MCF 10A (cell line): ENCODE measurements at regions of chr5 and their contacts with region 1.

Region 1: DNA sequence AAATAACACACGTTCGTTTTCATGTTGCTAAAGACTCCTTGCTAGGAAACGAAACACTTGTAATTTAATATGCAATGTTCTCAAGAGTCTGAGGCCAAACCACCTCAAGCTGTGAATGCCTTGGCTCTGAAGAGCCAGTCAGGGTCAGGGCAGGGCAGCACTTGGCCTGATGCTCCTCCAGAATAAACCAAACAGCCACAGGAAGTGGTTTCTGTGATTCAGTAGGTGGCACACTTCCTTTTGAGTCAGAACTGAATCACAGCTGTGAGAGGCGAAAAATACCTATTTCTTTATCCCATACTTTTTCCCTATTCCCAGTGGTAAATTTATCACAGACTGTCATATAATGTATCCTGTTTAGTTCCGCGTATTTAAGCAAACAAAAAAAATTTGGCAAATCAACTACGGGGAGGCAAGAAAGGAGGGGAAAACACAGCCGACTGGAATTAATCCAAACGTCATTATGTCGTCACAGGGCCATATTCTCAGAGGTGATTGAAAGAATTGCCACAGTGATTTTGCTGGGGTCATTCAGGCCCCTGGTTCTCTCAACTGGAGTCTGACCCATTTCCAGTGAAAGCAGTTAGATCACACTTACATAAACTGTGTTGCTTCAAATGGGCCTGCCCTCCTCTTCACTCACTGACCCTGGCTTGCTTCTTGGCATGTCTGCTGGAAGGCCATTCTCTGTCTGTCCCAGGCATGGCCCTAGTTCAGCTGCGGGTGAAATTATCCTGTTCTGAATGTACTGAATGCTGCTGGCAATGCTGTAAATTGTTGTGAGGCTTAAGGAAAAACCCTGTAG is 71.2 kb downstream of the ARRDC3 start:
- DNase-seq: peak; percentile 98
- H3K4me3 Mint-ChIP-seq: peak overlapping the region; percentile 50
- H3K27ac Mint-ChIP-seq: peak overlapping the region; percentile 91
- H3K4me1 Mint-ChIP-seq: peaks cover 43% of the 10 kb centered on the region
- H3K27me3 Mint-ChIP-seq: no peaks in the 10 kb centered on the region
- CTCF ChIP-seq: no peak

Region 2: DNA sequence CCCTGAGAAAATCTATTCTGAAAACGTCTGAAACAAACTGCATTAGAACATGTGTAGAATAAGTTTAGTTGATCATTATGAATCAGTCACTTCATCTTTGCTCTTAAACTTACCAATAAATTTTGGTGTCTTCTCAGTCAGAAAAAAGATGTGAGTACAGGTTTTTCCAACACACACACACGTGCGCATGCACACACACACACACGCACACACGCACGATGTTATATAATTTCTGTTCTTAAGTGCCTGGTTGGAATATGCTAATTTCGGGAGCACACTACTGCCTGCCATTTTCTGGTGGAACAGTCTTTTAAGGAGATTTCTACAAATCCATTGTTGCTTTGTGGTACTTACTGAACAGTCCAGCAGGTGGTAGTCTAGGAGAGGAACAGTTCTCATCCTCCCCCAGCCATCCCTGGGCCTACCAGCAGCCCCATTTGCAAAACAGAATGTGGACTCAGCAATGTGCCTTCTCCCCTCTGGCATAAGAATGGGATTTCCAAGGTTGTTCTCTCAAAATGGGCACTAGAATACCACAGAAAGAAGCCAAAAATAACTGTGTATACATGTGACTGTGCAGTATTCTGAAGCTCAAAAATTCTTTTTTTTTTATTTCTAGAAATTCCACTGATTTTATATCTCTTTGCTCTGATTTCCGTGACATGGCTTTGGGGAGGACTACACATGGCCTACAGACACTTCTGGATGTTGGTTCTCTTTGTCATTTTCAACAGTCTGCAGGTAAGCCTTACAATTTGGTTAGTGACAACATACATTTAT is 210.1 kb before region 1 on chr5:
- CTCF ChIA-PET with region 1: interaction called, 5 read pairs
- POLR2A ChIA-PET with region 1: no interaction called
- intact Hi-C with region 1: loop called (anchors 2 kb)
- DNase-seq: peak; percentile 83
- H3K4me3 Mint-ChIP-seq: no peak overlapping the region
- H3K27ac Mint-ChIP-seq: no peak overlapping the region
- H3K4me1 Mint-ChIP-seq: peaks cover 25% of the 10 kb centered on the region
- H3K27me3 Mint-ChIP-seq: no peaks in the 10 kb centered on the region
- CTCF ChIP-seq: peak; percentile 87

Region 3: DNA sequence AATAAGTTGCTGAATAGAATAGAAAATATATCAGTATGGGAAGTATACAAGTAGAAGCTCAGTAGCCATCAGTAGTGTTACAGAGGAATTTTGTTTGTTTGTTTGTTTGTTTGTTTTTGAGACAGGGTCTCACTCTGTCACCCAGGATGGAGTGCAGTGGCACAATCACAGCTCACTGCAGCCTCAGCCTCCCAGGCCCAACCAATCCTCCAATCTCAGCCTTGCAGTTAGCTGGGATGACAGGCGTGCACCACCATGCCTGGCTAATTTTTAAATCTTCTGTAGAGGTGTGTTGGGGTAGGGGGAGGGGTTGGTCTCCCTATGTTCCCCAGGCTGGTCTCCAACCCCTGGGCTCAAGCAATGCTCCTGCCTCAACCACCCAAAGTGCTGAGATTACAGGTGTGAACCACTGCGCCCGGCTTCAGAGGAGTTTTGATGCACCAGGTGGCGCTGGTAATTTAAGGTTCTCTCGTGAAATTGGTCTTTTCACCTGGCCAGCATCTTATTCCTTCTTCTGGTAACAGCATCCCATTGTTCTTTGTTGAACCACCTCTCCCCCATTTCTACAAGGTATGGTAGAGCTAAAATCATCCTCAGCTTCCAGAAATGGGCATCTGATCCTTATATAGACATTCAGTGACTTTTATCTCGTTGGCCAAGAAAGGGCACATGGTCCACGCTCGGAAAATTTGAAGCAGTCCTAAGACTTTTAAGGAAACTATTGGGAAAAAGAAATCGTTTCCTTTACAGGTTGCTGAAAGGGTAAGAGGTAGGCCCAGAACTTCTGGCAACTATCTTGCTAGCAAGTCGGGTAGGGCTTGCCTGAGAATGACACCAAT is 85.8 kb before region 1 on chr5:
- CTCF ChIA-PET with region 1: interaction called, 4 read pairs
- POLR2A ChIA-PET with region 1: interaction called, 3 read pairs
- intact Hi-C with region 1: loop called (anchors 1 kb)
- DNase-seq: peak; percentile 70
- H3K4me3 Mint-ChIP-seq: no peak overlapping the region
- H3K27ac Mint-ChIP-seq: no peak overlapping the region
- H3K4me1 Mint-ChIP-seq: peaks cover 22% of the 10 kb centered on the region
- H3K27me3 Mint-ChIP-seq: no peaks in the 10 kb centered on the region
- CTCF ChIP-seq: peak; percentile 65

Region 4: GRCh38 chr5:91293131-91293530 is 18.8 kb before region 1 on chr5:
- CTCF ChIA-PET with region 1: interaction called, 5 read pairs
- POLR2A ChIA-PET with region 1: interaction called, 27 read pairs
- intact Hi-C with region 1: loop called (anchors 2 kb)
- DNase-seq: no peak
- H3K4me3 Mint-ChIP-seq: no peak overlapping the region
- H3K27ac Mint-ChIP-seq: no peak overlapping the region
- H3K4me1 Mint-ChIP-seq: peaks cover 17% of the 10 kb centered on the region
- H3K27me3 Mint-ChIP-seq: no peaks in the 10 kb centered on the region
- CTCF ChIP-seq: no peak

Region 5: GRCh38 chr5:91301106-91301846 is 10.6 kb before region 1 on chr5:
- CTCF ChIA-PET with region 1: interaction called, 4 read pairs
- POLR2A ChIA-PET with region 1: interaction called, 27 read pairs
- intact Hi-C with region 1: loop called (anchors 2 kb)
- DNase-seq: peak; percentile 74
- H3K4me3 Mint-ChIP-seq: no peak overlapping the region
- H3K27ac Mint-ChIP-seq: peak overlapping the region; percentile 23
- H3K4me1 Mint-ChIP-seq: peaks cover 14% of the 10 kb centered on the region
- H3K27me3 Mint-ChIP-seq: no peaks in the 10 kb centered on the region
- CTCF ChIP-seq: no peak

Region 6: DNA sequence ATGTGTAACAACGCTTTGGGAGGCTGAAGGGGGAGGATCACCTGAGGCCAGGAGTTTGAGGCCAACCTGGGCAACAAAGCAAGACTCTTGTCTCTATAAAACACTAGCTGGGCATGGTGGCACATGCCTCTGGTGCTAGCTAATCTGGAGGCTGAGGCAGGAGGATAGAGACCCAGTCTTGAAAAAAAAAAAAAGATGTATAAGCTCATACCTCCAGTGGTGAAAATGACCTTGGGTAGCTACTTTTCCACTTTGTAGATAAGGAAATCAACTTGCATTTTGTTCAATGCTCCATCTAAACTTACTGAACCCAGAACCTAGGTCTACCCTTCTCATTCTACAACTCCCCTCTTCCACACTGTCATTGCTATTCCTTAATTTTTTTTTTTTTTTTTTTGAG is 54.7 kb after region 1 on chr5:
- CTCF ChIA-PET with region 1: interaction called, 4 read pairs
- POLR2A ChIA-PET with region 1: interaction called, 14 read pairs
- intact Hi-C with region 1: no loop called
- DNase-seq: no peak
- H3K4me3 Mint-ChIP-seq: no peak overlapping the region
- H3K27ac Mint-ChIP-seq: no peak overlapping the region
- H3K4me1 Mint-ChIP-seq: peaks cover 1% of the 10 kb centered on the region
- H3K27me3 Mint-ChIP-seq: no peaks in the 10 kb centered on the region
- CTCF ChIP-seq: no peak